HEK293T (cell line): ENCODE measurements at regions of chr5 and their contacts with region 1.

Region 1: GRCh38 chr5:52787600-52788504 is at the starts of genes ITGA1 and PELO:
- DNase-seq: peak; percentile 65

Region 2: GRCh38 chr5:52799983-52800393 is 12.1 kb after region 1 on chr5:
- CTCF ChIA-PET with region 1: interaction called, 3 read pairs
- POLR2A ChIA-PET with region 1: interaction called, 14 read pairs
- DNase-seq: peak; percentile 94